Activated CD8-positive, alpha-beta memory T cell treated with anti-CD3 and anti-CD28 coated beads, Interleukin-2, amount 10 ng/mL, durations not matched to agents 7 days and 5 days (primary cell): ENCODE measurements at regions of chr17 and their contacts with region 1.

Region 1: DNA sequence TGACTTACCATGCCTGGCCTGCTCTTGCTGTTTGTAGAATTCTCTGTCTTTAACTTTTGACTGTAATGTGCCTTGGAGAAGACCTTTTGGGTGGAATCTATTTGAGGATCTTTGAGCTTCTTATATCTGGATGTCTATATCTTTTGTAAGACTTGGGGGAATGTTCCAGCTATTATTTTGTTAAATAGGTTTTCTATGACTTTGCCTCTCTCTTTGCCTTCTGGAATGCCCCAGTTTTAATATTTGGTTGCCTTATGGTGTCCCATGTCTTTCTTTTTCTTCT is 10.3 kb upstream of the PHB1 start:
- DNase-seq: no peak
- ATAC-seq: no peak
- H3K4me3 Mint-ChIP-seq: no peak overlapping the region
- H3K27ac Mint-ChIP-seq: no peak overlapping the region
- H3K4me1 Mint-ChIP-seq: no peaks in the 10 kb centered on the region
- H3K27me3 Mint-ChIP-seq: peaks cover 31% of the 10 kb centered on the region

Region 2: GRCh38 chr17:49434821-49435670 is 10.1 kb after region 1 on chr17:
- CTCF ChIA-PET with region 1: interaction called, 17 read pairs
- DNase-seq: peak; percentile 64
- ATAC-seq: peak; percentile 57
- H3K4me3 Mint-ChIP-seq: no peak overlapping the region
- H3K27ac Mint-ChIP-seq: no peak overlapping the region
- H3K4me1 Mint-ChIP-seq: peaks cover 2% of the 10 kb centered on the region
- H3K27me3 Mint-ChIP-seq: peaks cover 38% of the 10 kb centered on the region